Activated CD4-positive, alpha-beta T cell treated with anti-CD3 and anti-CD28 coated beads for 36 hours (primary cell): ENCODE measurements at regions of chr17 and their contacts with region 1.

Region 1: GRCh38 chr17:43006639-43007551 is at the start of gene IFI35:
- DNase-seq: peak; percentile 94
- ATAC-seq: peak; percentile 97
- H3K4me3 Mint-ChIP-seq: peak within 1 kb of the TSS; percentile 99
- H3K27ac Mint-ChIP-seq: peak within 1 kb of the TSS; percentile 100
- H3K4me1 Mint-ChIP-seq: peaks cover 24% of the 10 kb centered on the region
- H3K27me3 Mint-ChIP-seq: no peaks in the 10 kb centered on the region
- total RNA-seq, gene IFI35: 65.3 to 68.1 TPM

Region 2: GRCh38 chr17:41758601-41759000 is 1248.3 kb before region 1 on chr17:
- CTCF ChIA-PET with region 1: no interaction called
- POLR2A ChIA-PET with region 1: no interaction called
- intact Hi-C with region 1: no loop called
- DNase-seq: no peak
- ATAC-seq: no peak
- H3K4me3 Mint-ChIP-seq: no peak overlapping the region
- H3K27ac Mint-ChIP-seq: no peak overlapping the region
- H3K4me1 Mint-ChIP-seq: no peaks in the 10 kb centered on the region
- H3K27me3 Mint-ChIP-seq: no peaks in the 10 kb centered on the region

Region 3: GRCh38 chr17:43024407-43025289 is 17.8 kb after region 1 on chr17 and contains the start of gene RND2:
- CTCF ChIA-PET with region 1: interaction called, 5 read pairs
- POLR2A ChIA-PET with region 1: interaction called, 4 read pairs
- intact Hi-C with region 1: loop called in 1 of 2 experiments (anchors 1 kb)
- DNase-seq: peak; percentile 89
- ATAC-seq: peak; percentile 68
- H3K4me3 Mint-ChIP-seq: peak within 1 kb of the TSS; percentile 78
- H3K27ac Mint-ChIP-seq: peak within 1 kb of the TSS; percentile 71
- H3K4me1 Mint-ChIP-seq: peaks cover 26% of the 10 kb centered on the region
- H3K27me3 Mint-ChIP-seq: no peaks in the 10 kb centered on the region
- total RNA-seq, gene RND2: 0.05 to 0.16 TPM